Naive thymus-derived CD4-positive, alpha-beta T cell (primary cell): ENCODE measurements at regions of chr16 and their contacts with region 1.

Region 1: DNA sequence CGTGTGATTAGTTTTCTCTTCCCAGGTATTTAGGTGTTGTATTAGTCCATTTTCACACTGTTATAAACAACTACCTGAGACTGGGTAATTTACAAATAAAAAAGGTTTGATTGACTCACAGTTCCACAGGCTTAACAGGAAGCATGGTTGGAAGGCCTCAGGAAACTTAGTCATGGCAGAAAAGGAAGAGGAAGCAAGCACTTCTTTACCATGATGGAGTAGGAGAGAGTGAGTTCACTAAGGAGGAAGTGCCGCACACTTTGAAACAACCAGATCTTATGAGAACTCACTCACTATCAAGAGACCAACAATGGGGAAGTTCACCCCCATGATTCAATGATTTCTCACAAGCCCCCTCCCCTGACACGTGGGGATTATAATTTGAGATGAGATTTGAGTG is 1343.7 kb upstream of the GOT2 start:
- DNase-seq: no peak
- ATAC-seq: peak; percentile 67
- H3K4me3 ChIP-seq: no peak overlapping the region
- H3K4me3 Mint-ChIP-seq: no peak overlapping the region
- H3K27ac ChIP-seq: no peak overlapping the region
- H3K27ac Mint-ChIP-seq: no peak overlapping the region
- H3K4me1 ChIP-seq: no peaks in the 10 kb centered on the region
- H3K4me1 Mint-ChIP-seq: peaks cover 0 to 1% (median 0%) of the 10 kb centered on the region in 7 donors
- H3K27me3 ChIP-seq: no peaks in the 10 kb centered on the region
- H3K27me3 Mint-ChIP-seq: no peaks in the 10 kb centered on the region

Region 2: DNA sequence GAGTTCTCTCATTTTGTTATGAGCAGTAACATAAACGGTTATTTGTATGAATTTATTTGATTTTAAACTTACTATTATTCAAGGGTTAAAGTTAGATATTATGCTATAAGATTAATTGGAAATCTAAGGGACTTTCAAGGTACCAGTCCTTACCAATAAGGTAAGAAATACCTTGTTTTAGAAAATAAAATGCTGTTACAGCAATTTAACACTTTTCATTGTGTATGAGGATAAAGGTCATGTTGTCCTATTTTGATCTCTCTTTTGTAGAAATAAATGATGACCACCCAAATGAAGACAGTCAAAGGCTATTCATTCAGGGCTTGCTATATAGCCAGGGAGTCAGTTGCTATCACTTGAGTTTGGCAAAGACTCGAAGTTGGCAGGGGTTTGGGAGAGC is 157.8 kb before region 1 on chr16:
- CTCF ChIA-PET with region 1: no interaction called
- POLR2A ChIA-PET with region 1: no interaction called
- intact Hi-C with region 1: loop called in 1 of 2 experiments (anchors 10 kb)
- DNase-seq: no peak
- ATAC-seq: no peak
- H3K4me3 ChIP-seq: no peak overlapping the region
- H3K4me3 Mint-ChIP-seq: no peak overlapping the region
- H3K27ac ChIP-seq: no peak overlapping the region
- H3K27ac Mint-ChIP-seq: no peak overlapping the region
- H3K4me1 ChIP-seq: no peaks in the 10 kb centered on the region
- H3K4me1 Mint-ChIP-seq: no peaks in the 10 kb centered on the region
- H3K27me3 ChIP-seq: no peaks in the 10 kb centered on the region
- H3K27me3 Mint-ChIP-seq: no peaks in the 10 kb centered on the region

Region 3: GRCh38 chr16:60151987-60152386 is 74.1 kb after region 1 on chr16:
- CTCF ChIA-PET with region 1: no interaction called
- POLR2A ChIA-PET with region 1: no interaction called
- intact Hi-C with region 1: no loop called
- DNase-seq: no peak
- ATAC-seq: no peak
- H3K4me3 ChIP-seq: no peak overlapping the region
- H3K4me3 Mint-ChIP-seq: no peak overlapping the region
- H3K27ac ChIP-seq: no peak overlapping the region
- H3K27ac Mint-ChIP-seq: no peak overlapping the region
- H3K4me1 ChIP-seq: no peaks in the 10 kb centered on the region
- H3K4me1 Mint-ChIP-seq: no peaks in the 10 kb centered on the region
- H3K27me3 ChIP-seq: no peaks in the 10 kb centered on the region
- H3K27me3 Mint-ChIP-seq: no peaks in the 10 kb centered on the region